ENCODE measurements at regions of chr14 and their contacts with region 1.

Region 1: DNA sequence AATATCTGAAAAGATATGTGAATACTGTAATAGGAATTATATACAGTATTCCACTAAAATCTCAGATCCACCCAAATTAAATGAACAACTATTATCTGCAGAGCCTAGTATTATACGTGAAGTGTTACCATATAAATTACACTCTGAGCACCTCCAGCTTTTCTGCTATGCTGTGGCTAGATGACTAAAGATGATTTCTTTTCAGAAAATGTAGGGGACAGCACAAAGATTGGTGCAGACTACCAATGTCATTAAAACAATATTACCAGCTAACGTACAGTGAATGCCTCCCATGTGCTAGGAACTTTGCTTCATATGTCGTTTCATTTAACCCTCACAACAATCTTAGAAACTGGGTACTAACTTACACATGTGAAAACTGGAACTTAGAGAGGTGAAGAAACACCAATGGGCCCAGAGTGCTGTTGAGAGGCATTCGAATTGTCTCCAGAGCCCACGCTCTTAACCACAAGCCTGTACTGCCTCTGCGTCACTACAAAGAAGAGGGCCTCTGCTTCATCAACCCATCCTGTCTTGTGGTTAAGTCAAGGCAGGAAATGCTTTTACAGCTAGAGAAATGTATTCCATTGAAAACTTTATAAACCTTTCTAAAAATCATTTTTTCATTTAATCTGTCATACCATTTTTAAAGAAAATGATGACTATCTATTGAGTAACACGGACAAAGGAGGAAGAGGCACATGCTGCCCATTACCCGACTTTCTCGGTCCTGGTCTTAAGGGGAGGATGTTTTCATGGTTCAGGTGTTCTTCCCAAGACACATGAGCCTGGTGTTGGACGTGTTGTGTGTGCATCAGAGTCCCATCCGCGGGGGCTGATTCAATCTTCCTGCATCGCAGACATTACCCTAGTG is 1.3 kb downstream of the GPR65 start:
- DNase-seq: peak; percentile 85
- ATAC-seq: peak; percentile 90
- H3K4me3 Mint-ChIP-seq: peak overlapping the region; percentile 91
- H3K27ac Mint-ChIP-seq: peak overlapping the region; percentile 96
- H3K4me1 Mint-ChIP-seq: peaks cover 63% of the 10 kb centered on the region
- H3K27me3 Mint-ChIP-seq: no peaks in the 10 kb centered on the region

Region 2: DNA sequence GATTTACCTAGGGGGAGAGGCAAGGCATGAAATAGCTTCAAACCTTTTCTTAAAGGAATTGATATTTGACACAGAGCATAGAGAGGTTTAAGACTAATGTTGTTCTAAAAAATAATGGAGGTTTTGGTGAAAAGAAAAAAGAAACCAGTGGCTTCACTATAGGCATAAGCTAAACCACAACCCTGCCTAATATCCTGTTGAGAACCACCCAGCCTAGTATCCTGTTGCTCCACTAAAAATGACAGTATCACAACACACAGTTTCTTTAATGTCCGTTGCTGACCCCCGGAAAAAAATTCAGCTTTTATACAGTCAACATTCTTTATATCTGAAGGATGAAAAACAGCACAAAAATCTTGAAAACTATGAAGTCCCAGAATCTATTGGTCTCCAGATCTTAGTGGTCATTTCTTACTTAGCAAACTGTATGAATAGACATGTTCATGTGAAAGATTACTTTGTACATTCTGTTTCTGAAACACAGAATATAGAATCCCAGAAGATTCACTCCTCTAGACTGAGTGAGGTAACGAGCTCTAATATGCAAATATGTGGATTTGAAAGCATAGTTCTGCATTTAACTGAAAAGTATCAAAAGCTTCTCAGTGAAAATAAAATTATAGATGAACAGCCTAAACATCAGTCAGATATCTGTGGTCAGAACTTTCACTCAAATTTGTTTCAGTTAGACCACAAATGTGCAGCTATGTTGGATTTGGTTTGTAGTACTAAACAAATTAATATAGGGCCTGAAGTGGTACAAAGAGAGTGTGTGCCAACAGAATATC is 53.7 kb before region 1 on chr14:
- CTCF ChIA-PET with region 1: interaction called, 9 read pairs
- POLR2A ChIA-PET with region 1: interaction called, 16 read pairs
- DNase-seq: peak; percentile 45
- ATAC-seq: peak; percentile 88
- H3K4me3 Mint-ChIP-seq: peak overlapping the region; percentile 75
- H3K27ac Mint-ChIP-seq: peak overlapping the region; percentile 94
- H3K4me1 Mint-ChIP-seq: peaks cover 52% of the 10 kb centered on the region
- H3K27me3 Mint-ChIP-seq: no peaks in the 10 kb centered on the region

Region 3: GRCh38 chr14:88089445-88089844 is 83.2 kb after region 1 on chr14:
- CTCF ChIA-PET with region 1: no interaction called
- POLR2A ChIA-PET with region 1: no interaction called
- DNase-seq: no peak
- ATAC-seq: no peak
- H3K4me3 Mint-ChIP-seq: no peak overlapping the region
- H3K27ac Mint-ChIP-seq: no peak overlapping the region
- H3K4me1 Mint-ChIP-seq: no peaks in the 10 kb centered on the region
- H3K27me3 Mint-ChIP-seq: no peaks in the 10 kb centered on the region